Activated CD4-positive, alpha-beta T cell treated with anti-CD3 and anti-CD28 coated beads, Interleukin-2, amount 10 ng/mL, durations not matched to agents 24 days and 14 days (primary cell): ENCODE measurements at regions of chr17 and their contacts with region 1.

Region 1: DNA sequence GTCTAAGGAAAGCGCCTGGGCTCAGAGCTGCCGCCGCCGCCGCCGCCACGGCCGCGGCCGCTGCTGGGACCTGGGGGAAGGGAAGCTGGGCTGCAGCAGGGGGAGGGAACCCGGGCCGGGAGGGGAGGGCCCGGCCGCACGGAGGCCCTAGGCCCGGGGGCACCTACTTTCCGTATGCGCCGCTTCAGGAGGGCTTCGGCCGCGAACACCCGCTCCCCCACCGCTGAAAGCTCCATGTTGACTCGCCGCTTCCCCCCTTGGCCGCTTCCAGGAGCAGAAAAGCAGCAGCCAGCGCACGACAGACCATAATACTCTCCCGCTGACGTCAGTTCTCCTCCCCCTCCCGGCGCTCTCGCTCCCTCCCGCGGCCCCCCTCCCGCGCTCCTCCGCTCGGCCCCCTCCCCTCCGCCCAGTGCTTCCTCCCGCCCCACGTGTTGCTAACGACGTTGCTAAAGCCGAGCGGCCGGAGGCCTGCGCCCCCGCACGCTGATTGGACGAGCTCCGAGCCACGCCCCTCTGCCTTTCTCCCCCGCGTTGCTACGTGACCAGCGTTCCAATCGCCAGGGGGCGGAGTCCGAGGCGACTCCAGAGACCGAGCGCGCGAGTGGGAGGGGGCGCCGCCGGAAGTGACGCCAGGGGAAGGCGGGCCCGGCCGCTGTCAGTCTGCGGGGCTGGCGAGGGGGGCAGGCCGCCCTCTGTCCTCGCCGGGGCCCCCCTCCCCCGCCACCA is at the start of gene CBX8:
- DNase-seq: peak; percentile 100
- H3K4me3 Mint-ChIP-seq: peak within 1 kb of the TSS; percentile 85
- H3K27ac Mint-ChIP-seq: peak within 1 kb of the TSS; percentile 90
- H3K4me1 Mint-ChIP-seq: peaks cover 30% of the 10 kb centered on the region
- H3K27me3 Mint-ChIP-seq: peaks cover 40% of the 10 kb centered on the region
- total RNA-seq, gene CBX8: 9.4 TPM in 2 replicates

Region 2: DNA sequence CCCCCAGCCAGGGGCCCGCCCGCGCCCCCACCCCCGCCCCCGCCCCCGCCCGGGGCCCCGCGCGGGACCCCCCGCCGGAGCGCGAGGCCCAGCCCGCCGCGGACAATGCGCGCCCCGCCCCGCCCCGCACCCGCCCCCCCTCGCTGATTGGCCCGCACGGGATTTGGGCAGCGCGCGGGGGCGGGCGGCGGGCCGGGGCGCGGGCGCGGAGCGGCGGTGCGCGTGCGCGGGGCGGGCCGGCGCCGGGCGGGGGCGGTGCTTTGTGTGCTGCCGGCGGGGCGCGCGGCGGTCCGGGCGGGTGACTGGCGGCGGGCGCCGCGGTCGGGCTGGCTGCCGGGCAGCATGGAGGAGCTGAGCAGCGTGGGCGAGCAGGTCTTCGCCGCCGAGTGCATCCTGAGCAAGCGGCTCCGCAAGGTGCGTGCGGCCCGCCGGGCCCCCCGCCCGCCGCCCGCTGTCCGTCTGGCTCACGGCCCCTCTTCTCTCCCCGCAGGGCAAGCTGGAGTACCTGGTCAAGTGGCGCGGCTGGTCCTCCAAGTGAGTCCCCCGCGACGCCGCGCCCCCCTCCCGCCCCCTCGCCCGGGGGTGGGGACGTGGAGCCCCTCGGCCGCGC is 18.9 kb before region 1 on chr17 and contains the start of gene CBX2:
- intact Hi-C with region 1: loop called (anchors 2 kb)
- DNase-seq: peak; percentile 96
- H3K4me3 Mint-ChIP-seq: peak within 1 kb of the TSS; percentile 91
- H3K27ac Mint-ChIP-seq: peak within 1 kb of the TSS; percentile 85
- H3K4me1 Mint-ChIP-seq: peaks cover 14% of the 10 kb centered on the region
- H3K27me3 Mint-ChIP-seq: peaks cover 64% of the 10 kb centered on the region
- total RNA-seq, gene CBX2: 7.5 and 8.2 TPM in 2 replicates

Region 3: DNA sequence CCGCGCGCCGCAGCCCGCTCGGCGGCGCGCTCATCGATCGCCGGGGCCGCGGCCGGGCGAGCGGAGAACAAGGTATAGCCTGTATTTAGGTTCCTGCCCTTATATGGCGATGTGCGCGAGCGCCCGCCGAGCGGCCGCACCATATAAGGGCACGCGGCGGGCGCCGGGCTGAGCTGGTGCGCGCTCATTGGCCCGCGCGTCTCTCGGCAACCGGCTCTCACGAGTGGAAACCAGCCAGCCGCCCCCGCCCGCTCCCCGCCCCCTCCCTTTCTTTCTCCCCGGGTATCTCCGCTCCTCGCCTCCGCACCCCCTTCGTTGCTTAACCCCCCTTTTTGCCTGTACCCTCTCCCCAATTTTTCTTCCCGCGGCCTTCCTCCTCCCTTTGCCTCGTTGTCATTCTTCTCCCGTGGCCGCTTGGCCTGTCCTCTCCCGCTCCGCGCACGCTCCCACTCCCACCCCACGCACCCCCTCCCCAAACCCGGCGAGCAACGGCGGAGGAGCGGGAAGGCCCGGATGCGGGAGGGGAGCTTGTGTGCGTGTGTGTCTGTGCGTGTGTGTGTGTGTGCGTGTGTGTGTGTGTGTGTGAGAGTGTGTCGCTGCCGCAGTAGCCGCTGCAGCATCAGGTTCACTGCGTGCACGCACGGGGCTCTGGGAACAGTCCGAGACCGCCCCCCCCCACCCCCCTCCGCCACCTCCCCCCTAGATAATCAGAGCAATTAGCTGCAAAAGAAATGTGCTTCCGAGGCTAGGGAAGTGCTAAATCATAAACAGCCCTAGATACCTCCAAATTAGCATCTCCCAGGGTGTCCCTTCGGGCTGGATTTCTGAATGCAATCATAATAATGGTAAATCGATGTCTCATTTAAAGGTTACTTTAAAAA is 13.4 kb after region 1 on chr17:
- intact Hi-C with region 1: loop called (anchors 2 kb)
- DNase-seq: peak; percentile 94
- H3K4me3 Mint-ChIP-seq: peak overlapping the region; percentile 55
- H3K27ac Mint-ChIP-seq: peak overlapping the region; percentile 32
- H3K4me1 Mint-ChIP-seq: peaks cover 31% of the 10 kb centered on the region
- H3K27me3 Mint-ChIP-seq: peaks cover 56% of the 10 kb centered on the region

Region 4: DNA sequence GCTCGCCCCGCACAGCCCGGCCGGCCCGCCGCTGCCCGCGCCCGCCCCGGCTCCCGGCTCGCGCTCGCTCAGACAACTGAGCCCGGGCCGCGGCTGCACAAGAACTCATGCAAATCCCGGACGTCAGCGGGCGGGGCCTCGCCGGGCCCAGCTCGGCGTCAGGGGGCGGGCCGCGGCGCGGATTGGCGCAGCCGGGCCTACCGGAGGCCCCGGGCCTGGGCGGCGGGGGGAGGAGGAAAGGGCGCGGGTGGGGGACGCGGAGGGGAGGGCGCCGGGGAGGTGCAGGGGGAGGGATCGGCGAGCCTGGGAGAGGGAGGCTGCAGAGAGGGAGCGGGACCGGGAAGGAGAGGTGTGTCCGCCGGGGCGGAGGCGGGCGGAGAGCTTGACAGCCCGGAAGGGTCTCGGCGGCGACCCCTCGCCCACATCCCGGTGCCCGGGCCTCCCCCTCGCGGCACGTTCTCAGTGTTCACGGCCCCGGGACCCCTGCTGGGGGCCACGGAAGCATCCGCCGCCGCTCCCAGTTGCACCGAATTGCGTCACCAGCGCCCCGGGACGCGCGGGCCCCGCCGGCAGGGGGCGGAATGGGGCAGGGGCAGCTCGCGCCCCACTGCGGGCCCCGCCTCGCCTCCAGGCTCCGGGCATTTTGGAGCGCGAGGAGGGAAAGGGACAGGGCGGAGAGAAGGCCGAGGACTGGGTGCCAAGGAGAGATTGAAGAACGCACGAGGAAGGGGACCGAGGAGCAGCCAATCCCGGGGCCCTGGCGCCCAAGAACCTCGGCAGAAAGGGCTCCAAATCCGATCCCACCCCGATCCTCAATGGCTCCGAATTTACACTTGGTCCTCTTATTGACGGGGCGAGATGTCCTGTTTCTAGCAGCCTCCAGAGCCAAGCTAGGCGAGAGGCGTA is 42.7 kb after region 1 on chr17 and contains the start of gene CBX4:
- intact Hi-C with region 1: loop called (anchors 1 kb)
- DNase-seq: peak; percentile 96
- H3K4me3 Mint-ChIP-seq: peak within 1 kb of the TSS; percentile 97
- H3K27ac Mint-ChIP-seq: peak within 1 kb of the TSS; percentile 90
- H3K4me1 Mint-ChIP-seq: peaks cover 26% of the 10 kb centered on the region
- H3K27me3 Mint-ChIP-seq: peaks cover 29% of the 10 kb centered on the region
- total RNA-seq, gene CBX4: 18.5 and 19.4 TPM in 2 replicates

Region 5: GRCh38 chr17:79991140-79991923 is 194.4 kb after region 1 on chr17:
- intact Hi-C with region 1: loop called (anchors 5 kb)
- DNase-seq: peak; percentile 94
- H3K4me3 Mint-ChIP-seq: peak overlapping the region; percentile 79
- H3K27ac Mint-ChIP-seq: no peak overlapping the region
- H3K4me1 Mint-ChIP-seq: peaks cover 23% of the 10 kb centered on the region
- H3K27me3 Mint-ChIP-seq: peaks cover 6% of the 10 kb centered on the region

Region 6: DNA sequence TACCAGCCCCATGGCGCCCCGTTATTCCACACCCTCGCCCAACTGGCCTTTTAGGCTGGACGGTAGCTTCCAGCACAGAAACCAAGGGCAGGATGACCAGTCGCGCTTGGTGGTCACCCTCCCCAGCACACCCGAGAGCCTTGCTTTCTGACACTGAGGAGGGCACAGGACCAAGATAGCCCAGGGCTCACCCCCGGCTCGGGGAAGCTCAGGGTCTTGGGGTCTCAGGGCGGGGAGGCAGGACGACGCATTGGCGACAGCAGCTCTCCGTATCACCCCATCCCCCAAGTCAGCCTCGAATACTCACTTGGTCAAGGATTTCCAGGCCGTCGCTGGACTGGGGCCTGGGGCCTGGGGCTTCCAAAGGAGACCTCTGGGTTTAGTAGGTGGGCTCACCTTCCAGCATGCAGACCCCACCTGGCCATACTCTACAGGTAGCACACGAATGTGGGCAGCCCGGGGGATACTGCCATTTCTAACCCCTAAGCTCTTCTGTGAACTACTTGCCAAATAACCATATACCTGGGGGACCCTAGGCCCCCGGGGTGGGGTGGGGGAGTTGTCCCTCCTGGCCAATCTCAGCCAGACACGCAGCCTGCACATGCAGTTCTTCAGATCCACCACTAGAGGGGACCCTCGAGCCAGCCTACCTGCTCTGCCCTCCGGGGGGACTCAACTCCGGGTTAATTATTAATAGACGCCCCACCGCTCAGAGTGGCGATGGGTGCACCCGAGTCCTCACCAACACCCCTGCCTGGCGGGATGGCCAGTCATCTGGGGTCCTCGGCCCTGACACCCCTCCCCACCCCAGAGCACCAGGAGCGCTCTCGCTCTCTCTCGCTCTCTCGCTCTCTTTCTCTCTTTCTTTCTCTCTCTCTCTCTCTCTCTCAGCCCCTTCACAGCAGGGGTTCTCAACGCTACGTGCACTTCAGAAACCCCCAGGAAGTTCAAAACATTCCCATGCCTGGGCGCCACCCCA is 208.7 kb after region 1 on chr17:
- intact Hi-C with region 1: no loop called
- DNase-seq: peak; percentile 87
- H3K4me3 Mint-ChIP-seq: no peak overlapping the region
- H3K27ac Mint-ChIP-seq: no peak overlapping the region
- H3K4me1 Mint-ChIP-seq: peaks cover 4% of the 10 kb centered on the region
- H3K27me3 Mint-ChIP-seq: peaks cover 2% of the 10 kb centered on the region

Region 7: GRCh38 chr17:80035943-80036714 is 239.2 kb after region 1 on chr17 and contains the start of gene CCDC40:
- intact Hi-C with region 1: loop called (anchors 5 kb)
- DNase-seq: peak; percentile 95
- H3K4me3 Mint-ChIP-seq: peak within 1 kb of the TSS; percentile 88
- H3K27ac Mint-ChIP-seq: peak within 1 kb of the TSS; percentile 90
- H3K4me1 Mint-ChIP-seq: peaks cover 7% of the 10 kb centered on the region
- H3K27me3 Mint-ChIP-seq: peaks cover 54% of the 10 kb centered on the region
- total RNA-seq, gene CCDC40: 0.37 and 0.54 TPM in 2 replicates